ENCODE measurements at regions of chr15 and their contacts with region 1.

Region 1: GRCh38 chr15:36039996-36040572 is 494.1 kb upstream of the DPH6 start:
- DNase-seq: no peak
- ATAC-seq: no peak
- H3K4me3 ChIP-seq: no peak overlapping the region
- H3K4me3 Mint-ChIP-seq: no peak overlapping the region
- H3K27ac ChIP-seq: no peak overlapping the region
- H3K27ac Mint-ChIP-seq: no peak overlapping the region
- H3K4me1 ChIP-seq: no peaks in the 10 kb centered on the region
- H3K4me1 Mint-ChIP-seq: no peaks in the 10 kb centered on the region
- H3K27me3 ChIP-seq: no peaks in the 10 kb centered on the region
- H3K27me3 Mint-ChIP-seq: no peaks in the 10 kb centered on the region
- CTCF ChIP-seq: no peak

Region 2: DNA sequence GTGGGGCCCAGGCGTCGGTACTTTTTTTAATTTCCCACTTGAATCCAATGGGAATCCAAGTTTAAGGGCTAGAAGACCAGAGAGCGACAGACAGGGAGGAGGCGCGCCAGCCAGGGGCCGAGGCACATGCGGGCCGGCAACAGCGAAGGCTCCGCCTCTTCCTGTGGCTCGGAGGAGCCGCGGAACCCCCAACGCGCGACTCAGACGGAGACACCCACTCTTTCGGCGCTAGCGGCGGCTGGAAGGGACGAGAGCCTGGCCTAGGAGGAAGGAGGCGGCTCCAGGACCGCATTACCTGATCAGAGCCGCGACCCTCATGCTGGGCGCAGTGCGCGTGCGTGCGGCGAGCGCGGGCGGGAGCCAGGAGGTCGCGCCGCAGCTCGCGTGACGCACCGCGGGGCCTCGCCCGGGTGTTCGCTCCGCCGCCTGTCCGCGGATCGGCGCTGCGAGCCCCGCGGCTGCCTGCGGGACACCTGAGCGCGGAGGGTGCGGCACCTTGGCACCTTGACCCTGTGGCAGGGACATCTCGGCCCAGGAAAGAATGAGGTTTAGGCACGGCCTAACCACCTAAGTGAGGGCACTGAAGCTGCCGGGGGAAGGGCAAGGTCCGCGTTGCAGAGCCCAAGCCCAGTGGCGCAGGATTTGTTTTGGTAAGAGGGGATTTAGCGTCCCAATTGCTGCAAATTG is 494.1 kb before region 1 on chr15 and contains the start of gene DPH6:
- CTCF ChIA-PET with region 1: no interaction called
- POLR2A ChIA-PET with region 1: no interaction called
- intact Hi-C with region 1: no loop called
- DNase-seq: peak; percentile 67 to 93 (median 79)
- ATAC-seq: peak; percentile 87
- H3K4me3 ChIP-seq: peak within 1 kb of the TSS; percentile 74 to 75
- H3K4me3 Mint-ChIP-seq: peak within 1 kb of the TSS; percentile 94
- H3K27ac ChIP-seq: peak within 1 kb of the TSS; percentile 93 to 97
- H3K27ac Mint-ChIP-seq: peak within 1 kb of the TSS; percentile 97
- H3K4me1 ChIP-seq: peaks cover 13% of the 10 kb centered on the region
- H3K4me1 Mint-ChIP-seq: peaks cover 22% of the 10 kb centered on the region
- H3K27me3 ChIP-seq: no peaks in the 10 kb centered on the region
- H3K27me3 Mint-ChIP-seq: no peaks in the 10 kb centered on the region
- CTCF ChIP-seq: no peak
- total RNA-seq, gene DPH6: 5.1 to 6.1 TPM

Region 3: DNA sequence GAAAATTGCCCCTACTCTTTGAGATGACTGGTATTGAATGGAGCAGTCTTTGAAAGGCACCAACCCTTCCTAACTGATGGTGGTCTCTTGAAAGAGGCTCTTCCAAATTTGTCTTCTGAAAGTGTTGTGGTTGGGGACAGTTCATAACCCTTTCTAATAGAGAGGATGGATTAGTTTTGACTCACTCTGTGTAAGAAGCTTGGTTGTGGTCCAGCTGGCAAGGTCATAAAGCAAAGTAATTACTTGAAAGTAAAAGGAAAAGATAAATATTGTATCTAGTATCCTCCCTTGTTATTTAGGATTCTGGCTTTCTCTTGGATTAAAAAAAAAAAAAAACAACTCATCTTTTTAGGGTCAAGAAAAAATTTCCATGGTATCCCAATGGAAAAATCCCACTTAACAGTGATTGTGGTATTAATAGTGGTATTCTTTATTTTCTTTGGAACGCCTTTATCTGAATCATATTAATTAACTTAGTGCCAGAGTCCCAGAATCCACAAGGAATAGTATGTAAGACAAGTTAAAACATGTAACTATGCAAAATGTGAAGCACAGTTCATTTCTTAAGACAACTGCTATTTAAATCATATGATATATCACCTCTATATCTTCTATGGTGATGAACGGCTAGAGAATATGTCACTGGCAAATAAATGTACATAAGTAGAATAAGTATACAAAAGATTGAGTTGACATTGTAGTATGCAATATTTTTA is 70.0 kb after region 1 on chr15:
- CTCF ChIA-PET with region 1: no interaction called
- POLR2A ChIA-PET with region 1: no interaction called
- intact Hi-C with region 1: loop called in 1 of 2 experiments (anchors 10 kb)
- DNase-seq: no peak
- ATAC-seq: no peak
- H3K4me3 ChIP-seq: no peak overlapping the region
- H3K4me3 Mint-ChIP-seq: no peak overlapping the region
- H3K27ac ChIP-seq: no peak overlapping the region
- H3K27ac Mint-ChIP-seq: no peak overlapping the region
- H3K4me1 ChIP-seq: no peaks in the 10 kb centered on the region
- H3K4me1 Mint-ChIP-seq: no peaks in the 10 kb centered on the region
- H3K27me3 ChIP-seq: no peaks in the 10 kb centered on the region
- H3K27me3 Mint-ChIP-seq: no peaks in the 10 kb centered on the region
- CTCF ChIP-seq: no peak